CD14-positive monocyte (primary cell): ENCODE measurements at regions of chr6 and their contacts with region 1.

Region 1: DNA sequence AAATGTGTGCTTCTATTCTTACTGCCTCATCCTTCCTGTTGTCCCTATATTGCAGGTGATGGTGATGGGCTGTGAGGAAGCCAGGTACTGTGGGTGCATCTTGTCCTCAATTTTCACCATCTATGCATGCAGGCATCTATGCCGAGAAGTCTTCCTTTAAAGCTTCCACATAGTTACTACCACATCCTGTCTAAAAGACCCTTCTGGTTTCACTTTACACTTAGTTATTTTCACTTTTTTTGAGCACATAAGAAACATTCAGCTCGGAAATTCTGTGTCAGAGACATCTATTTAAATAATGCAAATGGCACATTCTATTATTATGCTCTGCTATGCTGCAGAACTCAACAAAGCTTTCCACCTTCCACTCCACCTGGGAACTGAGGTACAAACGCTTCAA is 28.2 kb upstream of the FABP7 start:
- DNase-seq: no peak
- H3K4me3 ChIP-seq: no peak overlapping the region
- H3K4me3 Mint-ChIP-seq: no peak overlapping the region
- H3K27ac ChIP-seq: peak overlapping the region in 1 of 2 donors; percentile 73
- H3K27ac Mint-ChIP-seq: peak overlapping the region; percentile 61 to 90 (median 79)
- H3K4me1 ChIP-seq: peaks cover 63 to 70% of the 10 kb centered on the region in 2 donors
- H3K4me1 Mint-ChIP-seq: peaks cover 68% of the 10 kb centered on the region
- H3K27me3 ChIP-seq: no peaks in the 10 kb centered on the region
- H3K27me3 Mint-ChIP-seq: peaks cover 0 to 2% (median 0%) of the 10 kb centered on the region in 3 donors
- CTCF ChIP-seq: no peak

Region 2: DNA sequence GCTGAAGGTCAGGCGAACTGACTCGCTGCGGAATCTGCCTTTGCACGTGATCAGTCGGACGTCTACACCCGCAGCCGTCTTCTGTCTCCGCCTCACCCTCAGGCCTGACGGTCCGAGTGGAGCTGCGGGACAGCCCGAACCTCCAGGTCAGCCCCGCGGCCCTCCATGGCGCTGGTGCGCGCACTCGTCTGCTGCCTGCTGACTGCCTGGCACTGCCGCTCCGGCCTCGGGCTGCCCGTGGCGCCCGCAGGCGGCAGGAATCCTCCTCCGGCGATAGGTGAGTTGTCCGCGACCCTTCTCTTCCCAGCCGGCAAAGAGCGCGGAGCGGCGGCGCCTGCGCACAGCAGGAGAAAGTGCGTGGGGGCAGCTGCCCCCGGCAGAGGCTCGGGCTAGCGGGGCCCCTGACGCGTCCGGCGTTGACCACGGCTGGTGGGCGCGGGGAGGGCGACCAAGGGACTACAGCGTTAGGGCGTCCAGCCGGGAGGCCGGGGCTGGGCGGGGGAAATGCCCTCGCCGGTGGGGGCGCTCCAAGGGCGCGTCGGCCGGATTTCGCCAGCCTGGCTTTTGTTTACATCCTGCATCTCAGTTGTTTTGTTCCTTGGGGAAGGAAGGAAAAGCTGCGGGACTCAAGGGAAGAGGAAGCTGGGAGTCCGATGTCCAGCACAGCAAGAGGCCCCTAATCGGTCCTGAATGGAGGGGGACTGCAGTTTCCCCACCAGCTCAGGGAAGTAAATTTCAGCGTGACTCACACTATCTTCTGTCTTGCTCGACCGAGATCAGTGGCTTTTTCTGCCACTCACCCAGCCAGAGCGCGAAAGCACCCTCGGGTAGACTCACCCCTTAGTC is 38.1 kb after region 1 on chr6 and contains the start of gene SMPDL3A:
- intact Hi-C with region 1: loop called in 1 of 2 experiments (anchors 5 kb)
- DNase-seq: peak; percentile 79 to 87 (median 86)
- H3K4me3 ChIP-seq: peak within 1 kb of the TSS; percentile 81 to 89 (median 86)
- H3K4me3 Mint-ChIP-seq: peak within 1 kb of the TSS; percentile 91 to 97
- H3K27ac ChIP-seq: peak within 1 kb of the TSS; percentile 91 to 95
- H3K27ac Mint-ChIP-seq: peak within 1 kb of the TSS; percentile 94 to 99 (median 97)
- H3K4me1 ChIP-seq: peaks cover 38 to 41% of the 10 kb centered on the region in 2 donors
- H3K4me1 Mint-ChIP-seq: peaks cover 40% of the 10 kb centered on the region
- H3K27me3 ChIP-seq: peaks cover 28 to 35% of the 10 kb centered on the region in 2 donors
- H3K27me3 Mint-ChIP-seq: peaks cover 36 to 44% (median 44%) of the 10 kb centered on the region in 3 donors
- CTCF ChIP-seq: peak; percentile 48
- polyA plus RNA-seq, gene SMPDL3A: 21.3 to 30.1 (median 21.7) TPM